IMR-90 (cell line): ENCODE measurements at regions of chr12 and their contacts with region 1.

Region 1: DNA sequence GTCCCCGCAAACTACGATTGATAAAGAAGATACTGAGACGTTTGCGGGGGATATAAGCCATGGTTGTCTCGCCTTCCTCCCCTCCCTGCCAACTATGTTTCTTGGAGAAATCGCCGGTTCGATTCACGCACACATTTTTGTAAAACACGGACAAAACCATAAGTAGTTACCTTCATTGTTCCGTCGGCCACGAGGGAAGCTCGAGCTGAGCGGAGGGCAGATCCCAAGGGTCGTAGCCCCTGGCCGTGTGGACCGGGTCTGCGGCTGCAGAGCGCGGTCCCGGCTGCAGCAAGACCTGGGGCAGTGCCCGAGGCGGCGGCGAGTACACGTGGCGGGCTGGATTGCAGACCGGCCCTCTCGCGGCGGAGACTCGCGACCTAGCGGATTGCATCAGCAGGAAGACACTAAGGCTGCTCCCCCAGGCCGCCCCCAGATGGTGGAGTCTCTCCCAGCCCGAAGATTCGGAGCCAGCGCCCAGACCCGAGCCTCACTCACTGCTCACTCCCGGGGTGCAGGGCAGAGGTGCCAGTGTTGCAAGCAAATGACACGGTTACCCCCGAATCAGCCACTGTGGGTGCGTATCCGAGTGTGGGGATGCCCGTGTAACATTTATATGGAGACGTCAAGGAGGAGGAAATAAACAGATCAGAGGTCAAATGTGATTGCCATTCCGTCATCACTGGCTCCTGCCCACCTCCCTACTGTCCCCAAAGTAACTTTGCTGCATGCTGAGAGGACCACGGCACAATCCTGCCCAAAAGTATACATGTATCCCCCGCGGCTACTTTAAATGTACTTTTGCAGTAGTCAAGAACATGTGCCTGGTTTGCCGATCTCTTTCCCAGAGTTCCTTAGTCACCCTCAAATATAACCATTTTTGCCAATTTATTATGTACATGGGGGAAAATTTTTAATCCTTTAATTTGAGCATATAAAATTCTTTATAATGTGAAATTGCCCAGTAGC is at the start of gene BCAT1:
- DNase-seq: peak; percentile 88
- ATAC-seq: peak; percentile 76
- H3K4me3 ChIP-seq: peak within 1 kb of the TSS; percentile 81
- H3K27ac ChIP-seq: peak within 1 kb of the TSS; percentile 97
- H3K4me1 ChIP-seq: peaks cover 10% of the 10 kb centered on the region
- H3K27me3 ChIP-seq: no peaks in the 10 kb centered on the region
- CTCF ChIP-seq: peak; percentile 25; the same call in 1 of the 2 replicates
- POLR2A ChIP-seq: peak; percentile 91
- RAD21 ChIP-seq: peak; percentile 22; the same call in 1 of the 2 replicates
- total RNA-seq, gene BCAT1: 580 and 683 TPM in 2 replicates

Region 2: GRCh38 chr12:24840046-24840800 is 108.8 kb before region 1 on chr12:
- CTCF ChIA-PET with region 1: no interaction called
- POLR2A ChIA-PET with region 1: no interaction called
- dilution Hi-C with region 1: no loop called
- in situ Hi-C with region 1: loop called (anchors 5 kb)
- intact Hi-C with region 1: no loop called
- DNase-seq: peak; percentile 80
- ATAC-seq: peak; percentile 83
- H3K4me3 ChIP-seq: no peak overlapping the region
- H3K27ac ChIP-seq: no peak overlapping the region; the same call in 1 of the 2 replicates
- H3K4me1 ChIP-seq: peaks cover 12% of the 10 kb centered on the region
- H3K27me3 ChIP-seq: no peaks in the 10 kb centered on the region
- CTCF ChIP-seq: no peak
- POLR2A ChIP-seq: no peak
- RAD21 ChIP-seq: no peak

Region 3: DNA sequence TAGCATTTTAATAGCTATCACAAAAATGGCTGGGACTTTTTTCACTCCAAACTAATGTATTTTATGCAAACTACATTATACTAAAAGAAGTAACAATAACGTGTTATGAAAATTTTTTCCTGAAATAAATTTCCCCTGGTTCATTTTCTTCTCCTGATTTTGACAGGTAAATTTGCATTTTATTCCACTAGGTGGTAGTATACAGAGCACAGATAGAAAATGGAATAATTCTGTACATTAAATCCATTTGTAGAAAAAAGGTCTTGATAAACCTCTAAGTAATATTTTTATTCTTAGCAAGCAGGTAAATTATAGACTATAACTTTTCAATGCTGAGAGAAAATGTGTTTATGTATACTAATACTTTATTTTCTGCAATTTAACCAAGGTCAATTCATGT is 96.6 kb before region 1 on chr12:
- CTCF ChIA-PET with region 1: no interaction called
- POLR2A ChIA-PET with region 1: no interaction called
- dilution Hi-C with region 1: no loop called
- in situ Hi-C with region 1: no loop called
- intact Hi-C with region 1: loop called (anchors 5 kb)
- DNase-seq: no peak
- ATAC-seq: no peak
- H3K4me3 ChIP-seq: no peak overlapping the region
- H3K27ac ChIP-seq: no peak overlapping the region
- H3K4me1 ChIP-seq: peaks cover 9% of the 10 kb centered on the region; the same call in 1 of the 2 replicates
- H3K27me3 ChIP-seq: no peaks in the 10 kb centered on the region
- CTCF ChIP-seq: peak; percentile 30; the same call in 1 of the 2 replicates
- POLR2A ChIP-seq: no peak
- RAD21 ChIP-seq: 0 out of 2 replicates have a peak, but pooled peaks have one; percentile 11

Region 4: GRCh38 chr12:24909667-24910066 is 39.4 kb before region 1 on chr12:
- CTCF ChIA-PET with region 1: no interaction called
- POLR2A ChIA-PET with region 1: interaction called, 14 read pairs
- dilution Hi-C with region 1: no loop called
- in situ Hi-C with region 1: no loop called
- intact Hi-C with region 1: loop called (anchors 5 kb)
- DNase-seq: peak; percentile 97
- ATAC-seq: peak; percentile 25
- H3K4me3 ChIP-seq: no peak overlapping the region
- H3K27ac ChIP-seq: peak overlapping the region; percentile 24
- H3K4me1 ChIP-seq: peaks cover 23% of the 10 kb centered on the region
- H3K27me3 ChIP-seq: no peaks in the 10 kb centered on the region
- CTCF ChIP-seq: no peak
- POLR2A ChIP-seq: peak; percentile 61; the same call in 1 of the 2 replicates
- RAD21 ChIP-seq: no peak

Region 5: GRCh38 chr12:25101092-25101445 is 152.0 kb after region 1 on chr12:
- CTCF ChIA-PET with region 1: no interaction called
- POLR2A ChIA-PET with region 1: no interaction called
- dilution Hi-C with region 1: no loop called
- in situ Hi-C with region 1: no loop called
- intact Hi-C with region 1: no loop called
- DNase-seq: no peak
- ATAC-seq: no peak
- H3K4me3 ChIP-seq: no peak overlapping the region
- H3K27ac ChIP-seq: no peak overlapping the region
- H3K4me1 ChIP-seq: no peaks in the 10 kb centered on the region
- H3K27me3 ChIP-seq: peaks cover 4% of the 10 kb centered on the region; the same call in 1 of the 2 replicates
- CTCF ChIP-seq: no peak
- POLR2A ChIP-seq: no peak
- RAD21 ChIP-seq: no peak